ENCODE measurements at regions of chr12 and their contacts with region 1.

Region 1: GRCh38 chr12:15621140-15621539 is 168.0 kb downstream of the EPS8 start:
- DNase-seq: no peak
- ATAC-seq: no peak
- H3K4me3 ChIP-seq: no peak overlapping the region
- H3K27ac ChIP-seq: no peak overlapping the region
- H3K4me1 ChIP-seq: no peaks in the 10 kb centered on the region
- H3K27me3 ChIP-seq: no peaks in the 10 kb centered on the region
- CTCF ChIP-seq: no peak
- EP300 ChIP-seq: no peak
- POLR2A ChIP-seq: no peak
- RAD21 ChIP-seq: no peak

Region 2: GRCh38 chr12:15608941-15609340 is 12.2 kb before region 1 on chr12:
- CTCF ChIA-PET with region 1: interaction called, 3 read pairs
- POLR2A ChIA-PET with region 1: interaction called, 4 read pairs
- RAD21 ChIA-PET with region 1: no interaction called
- SMC1A ChIA-PET with region 1: interaction called, 23 read pairs
- in situ Hi-C with region 1: no loop called
- intact Hi-C with region 1: no loop called
- DNase-seq: no peak
- ATAC-seq: no peak
- H3K4me3 ChIP-seq: no peak overlapping the region
- H3K27ac ChIP-seq: no peak overlapping the region
- H3K4me1 ChIP-seq: no peaks in the 10 kb centered on the region
- H3K27me3 ChIP-seq: no peaks in the 10 kb centered on the region
- CTCF ChIP-seq: no peak
- EP300 ChIP-seq: no peak
- POLR2A ChIP-seq: no peak
- RAD21 ChIP-seq: no peak